Right lobe of liver (tissue), 6 donors: ENCODE measurements at regions of chr11 and their contacts with region 1.

Region 1: DNA sequence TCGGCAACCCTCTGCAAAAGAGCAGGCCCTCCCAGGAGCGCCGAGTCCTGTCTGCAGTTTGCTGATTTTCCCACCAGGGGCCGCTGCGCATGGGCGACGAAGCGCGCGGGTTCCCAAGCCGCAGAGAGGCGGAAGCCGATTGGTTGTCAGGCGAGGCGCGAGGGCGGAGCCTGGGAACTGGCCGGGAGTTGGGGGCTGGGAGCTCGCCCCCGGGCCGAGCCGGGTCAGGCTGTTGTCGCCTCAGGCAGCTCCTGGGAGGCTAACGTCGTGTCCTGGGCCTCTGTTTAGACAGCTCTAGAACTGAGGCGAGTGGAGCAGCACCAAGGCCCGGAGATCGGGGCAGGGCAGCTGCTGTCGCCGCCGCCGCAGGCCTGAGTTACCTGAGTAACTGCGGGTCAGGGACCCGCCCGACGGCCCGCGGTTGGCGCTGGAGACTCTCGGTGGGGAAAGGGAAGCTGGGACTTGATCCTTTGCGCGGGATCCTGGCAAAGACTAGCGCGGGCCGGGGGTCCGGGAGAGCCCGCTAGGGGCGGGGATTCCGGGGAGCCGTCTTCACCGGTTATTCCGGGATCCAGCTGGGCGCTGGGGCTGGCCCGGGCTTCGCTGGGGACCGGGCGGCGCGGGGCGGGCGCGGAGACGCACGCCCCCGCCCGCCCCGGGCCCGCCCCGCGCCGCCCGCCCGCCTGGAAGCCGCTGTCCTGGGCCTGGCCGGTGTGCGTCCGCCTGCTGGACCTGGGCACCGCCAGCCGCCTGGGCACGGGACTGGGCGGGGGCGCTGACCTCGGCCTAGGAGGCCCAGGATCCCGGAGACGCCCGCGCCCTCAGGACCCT is at the start of gene STIM1:
- DNase-seq: peak; percentile 96 to 97 (median 97)
- ATAC-seq: peak; percentile 85 to 90 (median 86)
- H3K4me3 ChIP-seq: peak within 1 kb of the TSS; percentile 74 to 96 (median 89)
- H3K27ac ChIP-seq: peak within 1 kb of the TSS; percentile 94 to 99 (median 95)
- H3K4me1 ChIP-seq: peaks cover 0 to 42% (median 18%) of the 10 kb centered on the region in 4 donors
- H3K27me3 ChIP-seq: no peaks in the 10 kb centered on the region
- CTCF ChIP-seq: peak; percentile 96 to 99 (median 98)
- POLR2A ChIP-seq: peak; percentile 80
- total RNA-seq, gene STIM1: 36.4 to 48.0 (median 40.5) TPM

Region 2: DNA sequence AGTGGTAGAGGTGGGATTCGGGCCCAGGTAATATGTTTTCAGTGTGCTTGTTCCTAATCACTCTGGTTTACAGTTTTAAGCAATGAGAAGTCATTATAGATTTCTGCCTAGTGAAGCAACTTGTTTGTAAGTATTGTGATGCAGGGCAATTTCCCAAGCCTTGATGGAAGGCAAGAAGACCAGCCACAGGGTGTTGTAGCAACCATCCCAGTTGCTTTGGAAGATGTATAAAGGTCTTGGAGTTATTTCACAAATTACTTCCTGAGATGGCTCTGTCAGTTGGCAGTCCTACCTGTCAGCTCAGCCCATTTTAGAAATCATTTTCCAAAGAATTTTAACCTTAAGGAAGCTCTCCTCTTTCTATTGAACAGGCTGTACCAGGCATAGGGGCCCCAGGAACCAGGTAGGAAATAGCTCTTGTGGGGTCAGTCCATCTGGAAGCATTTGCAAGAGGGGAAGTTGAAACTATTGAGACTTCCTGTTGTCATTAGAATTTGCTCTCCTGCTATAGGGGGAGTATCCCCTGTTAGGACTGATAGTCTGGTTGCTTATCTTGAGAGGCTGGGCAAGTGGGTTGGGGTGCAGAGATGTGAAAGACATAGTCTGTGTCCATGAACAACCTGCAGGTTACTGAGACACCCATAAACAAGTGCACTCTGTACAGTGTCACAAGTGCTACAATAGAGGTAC is 48.2 kb after region 1 on chr11:
- intact Hi-C with region 1: no loop called
- DNase-seq: no peak
- ATAC-seq: peak in 1 of 4 donors; percentile 15
- H3K4me3 ChIP-seq: no peak overlapping the region
- H3K27ac ChIP-seq: no peak overlapping the region
- H3K4me1 ChIP-seq: peaks cover 4 to 45% (median 14%) of the 10 kb centered on the region in 4 donors
- H3K27me3 ChIP-seq: no peaks in the 10 kb centered on the region
- CTCF ChIP-seq: no peak
- POLR2A ChIP-seq: no peak

Region 3: GRCh38 chr11:3939211-3939610 is 84.0 kb after region 1 on chr11:
- intact Hi-C with region 1: loop called in 1 of 2 experiments (anchors 10 kb)
- DNase-seq: no peak
- ATAC-seq: no peak
- H3K4me3 ChIP-seq: no peak overlapping the region
- H3K27ac ChIP-seq: no peak overlapping the region
- H3K4me1 ChIP-seq: peaks cover 0 to 28% (median 12%) of the 10 kb centered on the region in 4 donors
- H3K27me3 ChIP-seq: no peaks in the 10 kb centered on the region
- CTCF ChIP-seq: no peak
- POLR2A ChIP-seq: no peak

Region 4: DNA sequence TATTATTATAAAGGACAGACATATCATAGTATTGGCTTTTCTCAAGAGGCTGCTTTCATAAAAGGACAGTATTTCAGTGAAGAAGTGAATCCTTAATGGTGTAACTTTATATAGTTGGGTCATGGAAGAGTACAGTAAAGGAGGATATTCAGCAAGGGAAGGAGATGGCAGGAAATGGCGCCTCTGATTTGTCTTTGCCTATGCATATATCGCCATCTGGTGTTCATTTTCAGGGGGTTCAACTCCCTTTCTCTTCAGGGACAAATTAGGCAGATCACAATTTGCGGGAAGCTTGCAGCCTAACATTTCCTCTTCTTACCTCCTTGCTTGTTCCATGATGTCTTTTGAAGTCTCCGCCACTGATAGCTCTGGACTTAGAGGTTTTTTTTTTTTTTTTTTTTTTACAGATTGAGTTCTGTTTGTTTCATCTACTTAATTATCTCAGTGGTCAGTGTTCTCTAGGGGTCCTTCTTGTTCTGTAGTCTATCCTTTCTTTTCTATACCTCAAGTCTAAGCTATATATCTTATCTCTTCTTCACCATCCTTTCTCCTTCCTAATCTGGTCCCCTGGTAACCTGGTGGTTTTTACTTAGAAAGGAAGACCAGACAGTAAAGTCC is 217.6 kb after region 1 on chr11:
- intact Hi-C with region 1: loop called (anchors 5 to 10 kb)
- DNase-seq: peak in 1 of 3 donors; percentile 55
- ATAC-seq: peak; percentile 94 to 97 (median 96)
- H3K4me3 ChIP-seq: no peak overlapping the region
- H3K27ac ChIP-seq: peak overlapping the region in 1 of 3 donors; percentile 17
- H3K4me1 ChIP-seq: peaks cover 0 to 7% (median 0%) of the 10 kb centered on the region in 4 donors
- H3K27me3 ChIP-seq: no peaks in the 10 kb centered on the region
- CTCF ChIP-seq: peak; percentile 82 to 95 (median 86)
- POLR2A ChIP-seq: no peak